ENCODE measurements at regions of chr7 and their contacts with region 1.

Region 1: DNA sequence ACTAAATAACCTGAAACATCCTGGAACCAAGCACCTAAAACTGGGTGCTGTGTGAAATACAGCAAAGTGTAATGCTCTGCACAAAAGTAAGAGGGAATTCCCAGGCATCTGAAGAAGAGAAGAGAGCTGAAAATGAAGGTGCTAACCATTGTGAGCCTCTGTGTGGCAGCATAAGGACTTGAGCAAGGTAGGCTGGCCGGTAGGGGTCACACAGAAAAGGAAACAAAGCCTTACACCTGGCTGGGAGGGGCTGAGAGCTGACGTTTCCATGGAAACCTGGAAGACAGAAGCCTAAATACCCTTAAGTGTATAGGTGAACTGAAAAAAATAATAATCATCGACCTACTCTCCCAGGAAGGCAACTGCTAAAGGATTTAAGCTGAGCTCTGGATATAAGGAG is 48.6 kb downstream of the CUL1 start:
- DNase-seq: peak; percentile 77
- ATAC-seq: peak; percentile 99
- H3K4me3 Mint-ChIP-seq: no peak overlapping the region
- H3K27ac Mint-ChIP-seq: peak overlapping the region; percentile 83
- H3K4me1 Mint-ChIP-seq: peaks cover 32% of the 10 kb centered on the region
- H3K27me3 Mint-ChIP-seq: no peaks in the 10 kb centered on the region
- CTCF ChIP-seq: no peak

Region 2: GRCh38 chr7:148684289-148684830 is 62.9 kb before region 1 on chr7:
- CTCF ChIA-PET with region 1: no interaction called
- POLR2A ChIA-PET with region 1: no interaction called
- DNase-seq: peak; percentile 22
- ATAC-seq: peak; percentile 80
- H3K4me3 Mint-ChIP-seq: no peak overlapping the region
- H3K27ac Mint-ChIP-seq: peak overlapping the region; percentile 34
- H3K4me1 Mint-ChIP-seq: peaks cover 5% of the 10 kb centered on the region; the same call in 1 of the 2 replicates
- H3K27me3 Mint-ChIP-seq: no peaks in the 10 kb centered on the region
- CTCF ChIP-seq: no peak

Region 3: GRCh38 chr7:148720472-148720871 is 26.8 kb before region 1 on chr7:
- CTCF ChIA-PET with region 1: interaction called, 11 read pairs
- POLR2A ChIA-PET with region 1: interaction called, 4 read pairs
- DNase-seq: no peak
- ATAC-seq: 0 out of 2 replicates have a peak, but pooled peaks have one; percentile 22
- H3K4me3 Mint-ChIP-seq: no peak overlapping the region
- H3K27ac Mint-ChIP-seq: peak overlapping the region; percentile 80
- H3K4me1 Mint-ChIP-seq: peaks cover 63% of the 10 kb centered on the region
- H3K27me3 Mint-ChIP-seq: no peaks in the 10 kb centered on the region
- CTCF ChIP-seq: no peak

Region 4: GRCh38 chr7:148962823-148963582 is 215.7 kb after region 1 on chr7:
- CTCF ChIA-PET with region 1: interaction called, 18 read pairs
- POLR2A ChIA-PET with region 1: no interaction called
- DNase-seq: no peak
- ATAC-seq: peak; percentile 10; the same call in 1 of the 2 replicates
- H3K4me3 Mint-ChIP-seq: peak overlapping the region; percentile 87
- H3K27ac Mint-ChIP-seq: peak overlapping the region; percentile 85
- H3K4me1 Mint-ChIP-seq: peaks cover 18% of the 10 kb centered on the region
- H3K27me3 Mint-ChIP-seq: no peaks in the 10 kb centered on the region
- CTCF ChIP-seq: no peak

Measured in WTC11 (cell line).